SK-N-SH (cell line): ENCODE measurements at regions of chr20 and their contacts with region 1.

Region 1: GRCh38 chr20:38221119-38221589 is 39.4 kb downstream of the KIAA1755 start:
- DNase-seq: peak; percentile 94
- H3K4me3 ChIP-seq: peak overlapping the region in 1 of 2 experiments; percentile 3; a peak in 2 of 4 replicates
- H3K27ac ChIP-seq: no peak overlapping the region
- H3K4me1 ChIP-seq: peaks cover 24 to 25% of the 10 kb centered on the region in 2 experiments; a peak in 3 of 4 replicates
- H3K27me3 ChIP-seq: no peaks in the 10 kb centered on the region
- CTCF ChIP-seq: peak; percentile 97
- EP300 ChIP-seq: no peak
- RAD21 ChIP-seq: peak; percentile 95

Region 2: DNA sequence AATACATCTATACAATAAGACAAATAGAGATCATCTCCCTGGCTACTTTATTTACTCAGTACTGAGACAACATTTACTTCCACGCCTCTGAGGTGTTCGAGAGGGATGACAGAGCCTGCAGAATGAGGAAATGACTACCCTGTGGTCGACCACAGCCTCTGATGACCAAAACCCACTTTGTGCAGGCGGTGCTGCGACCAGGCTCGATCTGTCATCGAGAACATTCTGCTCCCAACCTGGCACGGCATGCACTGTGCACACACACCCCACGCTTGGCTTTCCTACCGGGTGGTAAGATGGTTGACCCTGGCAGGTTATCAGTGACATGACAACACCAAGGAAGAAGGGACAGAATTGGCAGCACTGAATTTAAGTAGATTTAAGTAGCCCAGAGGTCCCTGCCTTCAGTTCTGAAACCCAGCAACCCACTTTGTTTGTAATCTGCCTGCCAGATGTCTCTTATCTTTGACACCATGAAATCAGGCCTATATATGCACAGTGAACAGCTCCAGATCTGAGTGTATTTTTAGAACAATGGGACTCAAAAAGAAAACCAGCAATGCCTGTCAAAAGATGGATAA is 230.5 kb before region 1 on chr20:
- CTCF ChIA-PET with region 1: interaction called, 11 read pairs
- POLR2A ChIA-PET with region 1: no interaction called
- DNase-seq: peak; percentile 67
- H3K4me3 ChIP-seq: no peak overlapping the region
- H3K27ac ChIP-seq: peak overlapping the region in 1 of 2 experiments; percentile 91; a peak in 2 of 4 replicates
- H3K4me1 ChIP-seq: peaks cover 4 to 72% of the 10 kb centered on the region in 2 experiments; a peak in 3 of 4 replicates
- H3K27me3 ChIP-seq: no peaks in the 10 kb centered on the region
- CTCF ChIP-seq: no peak
- EP300 ChIP-seq: peak in 1 of 2 experiments; percentile 92; a peak in 2 of 4 replicates
- RAD21 ChIP-seq: no peak

Region 3: DNA sequence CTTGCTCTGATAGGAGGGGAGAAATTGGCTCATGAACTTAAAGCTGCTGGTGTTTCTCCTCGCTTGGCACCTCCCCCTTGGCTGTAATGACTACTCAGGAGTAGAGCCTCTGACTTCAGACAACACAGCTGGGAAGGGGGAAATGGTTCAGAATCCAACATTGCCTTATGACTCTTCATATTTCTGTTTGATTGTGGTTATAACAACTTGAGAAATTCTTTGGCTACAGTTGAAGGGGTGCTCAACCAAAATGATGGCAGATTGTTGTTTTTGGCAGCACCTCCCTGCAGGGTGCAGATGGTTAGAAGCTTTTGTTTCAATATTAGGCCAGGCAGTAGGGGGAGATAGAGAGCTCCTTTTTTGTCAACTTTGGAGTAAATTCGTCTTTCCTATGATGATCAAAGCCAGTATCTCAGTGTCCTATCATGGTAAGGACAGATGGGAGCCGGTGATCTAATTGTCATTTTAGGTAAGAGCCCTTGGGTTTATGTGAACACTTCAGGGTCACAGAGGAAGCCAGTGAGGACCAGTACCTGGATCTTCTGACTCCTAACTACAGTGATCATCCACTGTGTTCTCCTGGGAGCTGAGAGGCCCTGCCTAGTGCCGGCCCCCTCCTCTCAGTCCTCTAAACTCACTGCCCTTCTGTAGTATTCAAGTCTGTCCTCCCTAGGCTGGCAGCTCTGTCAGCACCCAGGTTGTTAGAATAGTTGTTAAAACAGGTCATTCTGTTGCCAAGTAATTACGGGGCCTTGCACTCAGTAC is 147.7 kb before region 1 on chr20:
- CTCF ChIA-PET with region 1: interaction called, 725 read pairs
- POLR2A ChIA-PET with region 1: no interaction called
- DNase-seq: peak; percentile 52
- H3K4me3 ChIP-seq: no peak overlapping the region; a peak in 1 of 4 replicates
- H3K27ac ChIP-seq: peak overlapping the region; percentile 36 to 78
- H3K4me1 ChIP-seq: peaks cover 10 to 22% of the 10 kb centered on the region in 2 experiments; a peak in 3 of 4 replicates
- H3K27me3 ChIP-seq: no peaks in the 10 kb centered on the region
- CTCF ChIP-seq: peak; percentile 81
- EP300 ChIP-seq: no peak
- RAD21 ChIP-seq: peak; percentile 70

Region 4: GRCh38 chr20:38143646-38144554 is 77.3 kb before region 1 on chr20:
- CTCF ChIA-PET with region 1: interaction called, 15 read pairs
- POLR2A ChIA-PET with region 1: no interaction called
- DNase-seq: peak; percentile 46
- H3K4me3 ChIP-seq: no peak overlapping the region
- H3K27ac ChIP-seq: peak overlapping the region; percentile 66 to 98
- H3K4me1 ChIP-seq: peaks cover 18 to 43% of the 10 kb centered on the region in 2 experiments
- H3K27me3 ChIP-seq: no peaks in the 10 kb centered on the region
- CTCF ChIP-seq: no peak
- EP300 ChIP-seq: peak in 1 of 2 experiments; percentile 83; a peak in 2 of 4 replicates
- RAD21 ChIP-seq: no peak

Region 5: DNA sequence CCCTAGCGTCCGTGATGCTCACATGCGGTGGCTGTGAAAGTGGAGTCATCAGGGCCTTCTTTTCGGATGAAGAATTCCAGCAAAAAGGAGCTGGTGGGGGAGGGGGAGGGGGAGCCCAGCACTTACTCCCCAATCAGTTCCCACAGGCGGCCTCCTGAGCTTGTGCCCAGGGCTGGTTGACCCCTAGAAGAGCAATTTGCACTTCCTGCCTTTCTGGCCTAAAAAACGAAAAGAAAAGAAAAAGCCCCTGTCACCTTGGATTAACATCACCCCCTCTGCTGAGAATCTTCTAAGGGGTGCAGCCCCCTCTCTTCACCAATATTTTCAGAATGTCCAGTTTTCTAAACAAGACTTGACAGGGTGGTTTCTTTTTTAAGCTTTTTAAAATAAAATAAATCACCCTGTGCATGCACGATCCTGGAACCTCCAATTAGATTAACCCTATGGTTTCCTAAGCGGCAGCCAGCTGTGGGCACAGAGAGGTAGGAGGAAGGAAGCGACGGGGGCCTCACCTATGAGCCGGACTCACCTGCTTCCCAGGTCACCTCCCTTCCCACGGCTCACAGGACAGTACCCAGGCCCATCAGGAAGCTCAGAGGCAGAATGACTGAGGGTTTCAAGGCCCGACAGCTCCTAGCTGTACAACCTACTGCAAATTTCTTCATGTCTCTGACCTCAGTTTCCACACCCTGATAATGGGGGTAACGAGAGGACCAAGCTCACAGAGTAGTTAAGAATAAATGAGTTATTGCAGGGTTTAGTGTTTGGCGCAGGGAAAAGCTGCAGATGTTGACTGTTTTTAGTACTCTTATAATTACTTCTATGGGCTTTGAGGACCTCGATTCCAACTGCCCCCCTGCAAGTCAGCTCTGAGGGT is 45.6 kb before region 1 on chr20:
- CTCF ChIA-PET with region 1: interaction called, 53 read pairs
- POLR2A ChIA-PET with region 1: no interaction called
- DNase-seq: no peak
- H3K4me3 ChIP-seq: no peak overlapping the region
- H3K27ac ChIP-seq: no peak overlapping the region
- H3K4me1 ChIP-seq: peaks cover 13 to 18% of the 10 kb centered on the region in 2 experiments
- H3K27me3 ChIP-seq: no peaks in the 10 kb centered on the region
- CTCF ChIP-seq: no peak
- EP300 ChIP-seq: peak in 1 of 2 experiments; percentile 32; a peak in 1 of 4 replicates
- RAD21 ChIP-seq: no peak

Region 6: DNA sequence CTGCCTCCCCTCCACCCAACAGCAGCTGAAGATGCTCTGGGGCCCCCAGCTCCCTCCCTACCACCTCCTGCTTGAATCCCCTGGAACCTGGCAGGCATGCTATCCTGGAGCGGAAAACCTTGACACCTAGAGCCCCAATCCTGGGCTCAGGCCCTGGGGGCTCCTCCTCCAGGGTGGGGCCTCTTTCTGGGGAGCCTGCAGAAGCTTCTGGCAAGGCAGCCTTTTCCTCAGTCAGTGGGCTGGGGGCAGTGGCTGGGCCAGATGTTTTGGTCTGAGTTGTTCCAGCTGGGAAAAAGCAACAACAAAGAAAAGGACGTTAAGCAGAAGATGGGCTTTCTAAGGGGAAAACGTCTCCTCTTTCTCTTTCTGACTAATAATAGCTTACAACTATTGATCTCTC is 18.3 kb after region 1 on chr20:
- CTCF ChIA-PET with region 1: interaction called, 25 read pairs
- POLR2A ChIA-PET with region 1: no interaction called
- DNase-seq: no peak
- H3K4me3 ChIP-seq: no peak overlapping the region
- H3K27ac ChIP-seq: no peak overlapping the region
- H3K4me1 ChIP-seq: no peaks in the 10 kb centered on the region
- H3K27me3 ChIP-seq: no peaks in the 10 kb centered on the region
- CTCF ChIP-seq: no peak
- EP300 ChIP-seq: no peak
- RAD21 ChIP-seq: no peak

Region 7: GRCh38 chr20:38270869-38271605 is 49.9 kb after region 1 on chr20:
- CTCF ChIA-PET with region 1: no interaction called
- POLR2A ChIA-PET with region 1: no interaction called
- DNase-seq: no peak
- H3K4me3 ChIP-seq: peak overlapping the region in 1 of 2 experiments; percentile 39; a peak in 1 of 4 replicates
- H3K27ac ChIP-seq: peak overlapping the region in 1 of 2 experiments; percentile 80; a peak in 2 of 4 replicates
- H3K4me1 ChIP-seq: peaks cover 0 to 24% of the 10 kb centered on the region in 2 experiments; a peak in 2 of 4 replicates
- H3K27me3 ChIP-seq: no peaks in the 10 kb centered on the region
- CTCF ChIP-seq: no peak
- EP300 ChIP-seq: peak in 1 of 2 experiments; percentile 56; a peak in 1 of 4 replicates
- RAD21 ChIP-seq: no peak